ENCODE measurements at regions of chr4 and their contacts with region 1.

Region 1: GRCh38 chr4:77862478-77863216 is at the start of gene MRPL1:
- DNase-seq: peak; percentile 91
- H3K4me3 ChIP-seq: peak within 1 kb of the TSS; percentile 49 to 73 (median 56)
- H3K27ac ChIP-seq: peak within 1 kb of the TSS; percentile 91 to 99 (median 95)
- H3K4me1 ChIP-seq: peaks cover 0 to 27% (median 12%) of the 10 kb centered on the region in 4 donors
- H3K27me3 ChIP-seq: no peaks in the 10 kb centered on the region
- CTCF ChIP-seq: peak in 1 of 5 experiments; percentile 6
- EP300 ChIP-seq: no peak
- POLR2A ChIP-seq: peak; percentile 75
- total RNA-seq, gene MRPL1: 3.7 to 31.8 (median 19.6) TPM

Region 2: GRCh38 chr4:77819843-77820648 is 42.6 kb before region 1 on chr4:
- in situ Hi-C with region 1: no loop called
- intact Hi-C with region 1: loop called (anchors 2 kb)
- DNase-seq: peak; percentile 96
- H3K4me3 ChIP-seq: peak overlapping the region; percentile 62 to 98 (median 84)
- H3K27ac ChIP-seq: peak overlapping the region; percentile 96 to 100 (median 100)
- H3K4me1 ChIP-seq: peaks cover 8 to 38% (median 27%) of the 10 kb centered on the region in 4 donors
- H3K27me3 ChIP-seq: no peaks in the 10 kb centered on the region
- CTCF ChIP-seq: no peak
- EP300 ChIP-seq: no peak
- POLR2A ChIP-seq: peak; percentile 95

Region 3: GRCh38 chr4:79638735-79639134 is 1776.1 kb after region 1 on chr4:
- in situ Hi-C with region 1: no loop called
- intact Hi-C with region 1: no loop called
- DNase-seq: no peak
- H3K4me3 ChIP-seq: no peak overlapping the region
- H3K27ac ChIP-seq: no peak overlapping the region
- H3K4me1 ChIP-seq: no peaks in the 10 kb centered on the region
- H3K27me3 ChIP-seq: no peaks in the 10 kb centered on the region
- CTCF ChIP-seq: no peak
- EP300 ChIP-seq: no peak
- POLR2A ChIP-seq: no peak